GM12878 (cell line): ENCODE measurements at regions of chr13 and their contacts with region 1.

Region 1: GRCh38 chr13:80873589-80873988 is 532.7 kb upstream of the SPRY2 start:
- DNase-seq: peak; percentile 33
- ATAC-seq: peak; percentile 100
- H3K4me3 ChIP-seq: no peak overlapping the region
- H3K27ac ChIP-seq: no peak overlapping the region
- H3K4me1 ChIP-seq: no peaks in the 10 kb centered on the region
- H3K27me3 ChIP-seq: no peaks in the 10 kb centered on the region
- CTCF ChIP-seq: no peak
- EP300 ChIP-seq: peak in 1 of 2 experiments; percentile 77; a peak in 1 of 4 replicates
- POLR2A ChIP-seq: no peak
- RAD21 ChIP-seq: no peak

Region 2: DNA sequence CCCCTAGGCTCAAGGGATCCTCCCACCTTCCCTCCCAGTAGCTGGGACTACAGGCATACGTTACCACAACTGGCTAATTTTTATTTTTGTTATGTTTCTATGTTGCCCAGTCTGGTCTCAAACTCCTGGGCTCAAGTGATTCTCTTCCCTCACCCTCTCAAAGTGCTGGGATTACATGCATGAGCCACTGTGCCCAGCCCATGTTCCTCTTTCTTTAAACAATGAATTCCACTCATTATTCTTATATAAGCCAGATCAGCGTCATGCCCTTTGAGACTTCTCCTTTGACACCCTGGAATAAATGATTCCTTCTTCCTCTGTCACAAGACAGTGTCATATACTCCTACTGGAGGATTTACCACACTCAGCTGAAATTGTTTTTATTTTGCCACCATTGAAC is 12.7 kb before region 1 on chr13:
- CTCF ChIA-PET with region 1: interaction called, 7 read pairs
- POLR2A ChIA-PET with region 1: interaction called, 4 read pairs
- RAD21 ChIA-PET with region 1: interaction called, 8 read pairs
- SMC1A ChIA-PET with region 1: interaction called, 11 read pairs
- in situ Hi-C with region 1: no loop called
- intact Hi-C with region 1: no loop called
- DNase-seq: no peak
- ATAC-seq: no peak
- H3K4me3 ChIP-seq: no peak overlapping the region
- H3K27ac ChIP-seq: no peak overlapping the region
- H3K4me1 ChIP-seq: no peaks in the 10 kb centered on the region
- H3K27me3 ChIP-seq: no peaks in the 10 kb centered on the region
- CTCF ChIP-seq: no peak
- EP300 ChIP-seq: no peak
- POLR2A ChIP-seq: no peak
- RAD21 ChIP-seq: no peak

Region 3: GRCh38 chr13:81078048-81078447 is 204.5 kb after region 1 on chr13:
- CTCF ChIA-PET with region 1: no interaction called
- POLR2A ChIA-PET with region 1: no interaction called
- RAD21 ChIA-PET with region 1: no interaction called
- SMC1A ChIA-PET with region 1: no interaction called
- in situ Hi-C with region 1: no loop called
- intact Hi-C with region 1: no loop called
- DNase-seq: no peak
- ATAC-seq: no peak
- H3K4me3 ChIP-seq: no peak overlapping the region
- H3K27ac ChIP-seq: no peak overlapping the region
- H3K4me1 ChIP-seq: no peaks in the 10 kb centered on the region
- H3K27me3 ChIP-seq: no peaks in the 10 kb centered on the region
- CTCF ChIP-seq: no peak
- EP300 ChIP-seq: no peak
- POLR2A ChIP-seq: no peak
- RAD21 ChIP-seq: no peak

Region 4: DNA sequence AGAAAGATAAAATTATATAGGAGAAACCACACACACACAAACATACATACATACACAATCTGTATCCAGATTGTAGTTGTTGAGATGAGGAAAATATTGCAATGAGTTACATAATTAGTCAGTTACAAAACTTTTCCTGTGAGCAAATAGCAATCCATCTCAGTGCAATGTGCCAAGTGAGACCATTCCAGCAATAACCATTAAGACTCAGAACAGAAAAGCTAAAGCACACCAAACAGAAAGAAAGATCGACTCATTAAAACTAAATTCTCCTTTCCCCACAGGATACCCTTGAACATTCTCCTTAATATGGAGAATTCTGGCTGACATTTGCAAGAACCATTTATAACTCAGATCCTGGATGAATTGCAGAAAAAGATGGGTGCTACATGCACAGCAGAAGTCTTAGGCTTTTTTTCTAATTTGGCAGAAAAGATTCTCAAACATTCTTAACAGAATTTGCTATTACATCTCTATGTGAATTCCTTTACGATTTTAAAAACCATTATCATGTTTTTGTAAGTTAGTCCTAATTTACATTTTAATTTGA is 808.6 kb after region 1 on chr13:
- CTCF ChIA-PET with region 1: no interaction called
- POLR2A ChIA-PET with region 1: no interaction called
- RAD21 ChIA-PET with region 1: no interaction called
- SMC1A ChIA-PET with region 1: no interaction called
- in situ Hi-C with region 1: no loop called
- intact Hi-C with region 1: no loop called
- DNase-seq: no peak
- ATAC-seq: no peak
- H3K4me3 ChIP-seq: no peak overlapping the region
- H3K27ac ChIP-seq: no peak overlapping the region
- H3K4me1 ChIP-seq: no peaks in the 10 kb centered on the region
- H3K27me3 ChIP-seq: no peaks in the 10 kb centered on the region
- CTCF ChIP-seq: no peak
- EP300 ChIP-seq: no peak
- POLR2A ChIP-seq: no peak
- RAD21 ChIP-seq: no peak